ENCODE measurements at regions of chr4 and their contacts with region 1.

Region 1: GRCh38 chr4:4248029-4248884 is at the start of gene TMEM128:
- DNase-seq: peak; percentile 88
- ATAC-seq: peak; percentile 96
- H3K4me3 Mint-ChIP-seq: peak within 1 kb of the TSS; percentile 98
- H3K27ac Mint-ChIP-seq: peak within 1 kb of the TSS; percentile 98
- H3K4me1 Mint-ChIP-seq: peaks cover 25% of the 10 kb centered on the region
- H3K27me3 Mint-ChIP-seq: peaks cover 2% of the 10 kb centered on the region
- CTCF ChIP-seq: no peak
- total RNA-seq, gene TMEM128: 15.1 and 17.1 TPM in 2 replicates

Region 2: DNA sequence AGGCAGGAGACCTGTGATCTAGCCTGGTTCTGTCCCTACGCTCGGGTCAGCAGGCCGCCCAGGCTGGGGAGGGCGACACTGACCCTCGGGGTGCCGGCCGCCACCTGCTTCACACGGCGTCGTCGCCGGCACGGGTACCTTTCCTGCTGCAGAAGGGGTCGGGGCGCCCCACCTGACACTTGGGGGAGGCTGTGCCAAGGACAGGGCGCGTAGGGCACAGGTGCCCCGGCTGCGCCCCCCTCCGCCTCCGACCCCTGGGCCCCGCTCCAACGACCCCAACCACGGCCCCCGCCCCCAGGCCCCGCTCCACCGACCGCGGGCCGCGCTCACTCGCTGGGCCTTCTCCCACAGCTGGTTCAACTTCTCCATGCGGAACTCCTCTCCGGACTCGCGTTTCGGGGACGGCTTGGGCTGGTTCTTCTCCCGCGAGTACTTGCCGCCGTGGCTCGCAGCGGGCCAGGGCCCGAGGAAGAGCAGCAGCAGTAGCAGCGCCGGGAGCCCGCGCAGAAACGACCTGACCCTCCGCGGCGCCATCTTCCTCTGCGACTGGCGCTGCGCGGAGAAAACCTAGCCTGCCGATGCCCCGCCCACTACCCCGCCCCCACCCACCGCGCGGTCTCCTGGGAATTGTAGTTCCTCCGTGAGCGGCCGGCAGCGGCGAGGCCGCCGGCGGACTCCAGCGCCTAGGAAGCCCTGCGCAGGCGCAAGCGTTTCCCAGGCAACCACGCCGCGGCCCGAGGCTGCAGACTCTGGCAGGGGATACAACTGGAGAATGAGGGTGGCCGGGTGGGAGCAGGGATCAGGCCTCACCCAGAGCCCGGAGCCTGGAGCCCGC is 716.2 kb before region 1 on chr4 and contains the start of gene LRPAP1:
- CTCF ChIA-PET with region 1: no interaction called
- POLR2A ChIA-PET with region 1: no interaction called
- intact Hi-C with region 1: loop called (anchors 5 kb)
- DNase-seq: peak; percentile 91
- ATAC-seq: peak; percentile 89
- H3K4me3 Mint-ChIP-seq: peak within 1 kb of the TSS; percentile 99
- H3K27ac Mint-ChIP-seq: peak within 1 kb of the TSS; percentile 94
- H3K4me1 Mint-ChIP-seq: peaks cover 42% of the 10 kb centered on the region
- H3K27me3 Mint-ChIP-seq: no peaks in the 10 kb centered on the region
- CTCF ChIP-seq: no peak
- total RNA-seq, gene LRPAP1: 60.9 and 62.9 TPM in 2 replicates

Region 3: DNA sequence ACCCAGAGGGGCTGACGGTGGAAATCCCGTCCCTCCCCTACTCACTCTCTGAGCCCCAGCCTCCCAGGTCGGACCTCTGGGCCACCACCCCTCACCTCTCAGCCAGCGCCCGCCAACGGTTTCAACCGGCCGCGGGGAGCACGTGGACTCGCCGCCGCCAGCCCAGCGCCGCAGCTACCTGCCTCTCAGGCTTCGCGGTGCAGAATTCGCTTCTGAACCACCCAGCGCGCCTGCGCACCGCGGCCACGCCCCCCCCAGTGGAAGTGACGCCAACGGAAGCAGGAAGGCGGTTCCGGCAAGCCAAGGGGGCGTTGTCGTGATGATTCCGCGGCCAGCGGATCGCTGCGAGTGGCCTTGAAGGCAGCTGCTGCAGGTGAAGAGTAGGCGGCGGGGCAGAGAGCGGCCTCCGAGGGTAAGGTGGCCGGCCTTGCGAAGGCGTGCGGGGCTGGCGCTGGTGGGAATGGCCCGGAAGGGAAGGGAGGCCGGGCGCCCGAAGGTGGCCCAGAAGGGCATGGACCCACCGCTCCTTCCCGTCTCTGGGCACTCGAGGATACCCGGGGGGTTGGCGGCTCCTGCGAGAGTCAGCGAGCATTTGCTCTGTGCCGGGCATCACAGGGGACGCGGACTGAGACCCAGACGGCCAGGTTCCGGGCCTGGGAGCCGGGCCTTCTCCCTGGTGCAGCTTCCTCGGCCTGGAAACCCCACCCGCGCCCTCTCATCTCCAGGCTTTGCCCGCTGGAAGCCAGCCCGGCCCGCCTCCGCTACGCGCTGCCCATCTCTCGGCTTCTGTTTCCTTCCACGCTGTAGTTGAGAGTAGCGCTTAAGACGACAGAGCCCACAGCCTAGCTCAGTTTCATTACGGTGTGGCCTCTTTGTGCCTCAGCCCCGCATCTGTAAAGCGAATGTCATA is 41.9 kb after region 1 on chr4 and contains the starts of genes LYAR and ZBTB49:
- CTCF ChIA-PET with region 1: no interaction called
- POLR2A ChIA-PET with region 1: interaction called, 11 read pairs
- intact Hi-C with region 1: loop called (anchors 1 kb)
- DNase-seq: peak; percentile 97
- ATAC-seq: peak; percentile 95
- H3K4me3 Mint-ChIP-seq: peak within 1 kb of the TSS; percentile 96
- H3K27ac Mint-ChIP-seq: peak within 1 kb of the TSS; percentile 72
- H3K4me1 Mint-ChIP-seq: peaks cover 36% of the 10 kb centered on the region
- H3K27me3 Mint-ChIP-seq: no peaks in the 10 kb centered on the region
- CTCF ChIP-seq: no peak
- total RNA-seq, gene LYAR: 15.9 and 20.9 TPM in 2 replicates
- total RNA-seq, gene ZBTB49: 7.2 and 11.6 TPM in 2 replicates

Region 4: GRCh38 chr4:4334798-4335520 is 86.7 kb after region 1 on chr4:
- CTCF ChIA-PET with region 1: interaction called, 13 read pairs
- POLR2A ChIA-PET with region 1: no interaction called
- intact Hi-C with region 1: loop called (anchors 1 kb)
- DNase-seq: peak; percentile 48
- ATAC-seq: peak; percentile 75
- H3K4me3 Mint-ChIP-seq: peak overlapping the region; percentile 32
- H3K27ac Mint-ChIP-seq: no peak overlapping the region
- H3K4me1 Mint-ChIP-seq: peaks cover 6% of the 10 kb centered on the region
- H3K27me3 Mint-ChIP-seq: peaks cover 4% of the 10 kb centered on the region
- CTCF ChIP-seq: peak; percentile 49

Region 5: GRCh38 chr4:4430492-4431197 is 182.4 kb after region 1 on chr4:
- CTCF ChIA-PET with region 1: no interaction called
- POLR2A ChIA-PET with region 1: no interaction called
- intact Hi-C with region 1: loop called (anchors 5 kb)
- DNase-seq: no peak
- ATAC-seq: peak; percentile 37
- H3K4me3 Mint-ChIP-seq: no peak overlapping the region
- H3K27ac Mint-ChIP-seq: no peak overlapping the region
- H3K4me1 Mint-ChIP-seq: no peaks in the 10 kb centered on the region
- H3K27me3 Mint-ChIP-seq: no peaks in the 10 kb centered on the region
- CTCF ChIP-seq: no peak

Region 6: GRCh38 chr4:4541661-4542570 is 293.7 kb after region 1 on chr4 and contains the start of gene STX18:
- CTCF ChIA-PET with region 1: no interaction called
- POLR2A ChIA-PET with region 1: interaction called, 5 read pairs
- intact Hi-C with region 1: loop called (anchors 5 kb)
- DNase-seq: peak; percentile 92
- ATAC-seq: peak; percentile 95
- H3K4me3 Mint-ChIP-seq: peak within 1 kb of the TSS; percentile 90
- H3K27ac Mint-ChIP-seq: peak within 1 kb of the TSS; percentile 88
- H3K4me1 Mint-ChIP-seq: peaks cover 42% of the 10 kb centered on the region
- H3K27me3 Mint-ChIP-seq: no peaks in the 10 kb centered on the region
- CTCF ChIP-seq: no peak
- total RNA-seq, gene STX18: 27.1 and 27.3 TPM in 2 replicates

Region 7: DNA sequence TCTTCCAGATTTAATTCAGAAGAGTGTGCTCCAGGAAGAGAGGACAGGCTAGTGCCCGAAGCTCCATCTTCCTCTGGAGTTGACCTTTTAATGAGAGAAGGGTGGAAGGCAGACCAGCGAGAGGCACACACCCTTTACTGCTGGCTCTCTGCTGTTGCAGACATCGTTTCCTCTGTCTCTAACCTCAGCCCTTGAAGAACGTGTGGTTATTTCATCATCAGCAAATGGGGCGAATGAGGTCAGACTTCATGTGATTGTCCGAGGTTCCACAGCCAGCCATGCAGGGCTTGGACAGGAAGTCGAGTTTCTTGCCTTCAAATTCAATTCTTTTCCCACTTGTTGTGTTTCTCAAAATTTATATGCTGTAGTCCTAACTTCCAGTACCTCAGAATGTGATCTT is 456.0 kb after region 1 on chr4:
- CTCF ChIA-PET with region 1: no interaction called
- POLR2A ChIA-PET with region 1: no interaction called
- intact Hi-C with region 1: no loop called
- DNase-seq: no peak
- ATAC-seq: no peak
- H3K4me3 Mint-ChIP-seq: no peak overlapping the region
- H3K27ac Mint-ChIP-seq: no peak overlapping the region
- H3K4me1 Mint-ChIP-seq: no peaks in the 10 kb centered on the region
- H3K27me3 Mint-ChIP-seq: no peaks in the 10 kb centered on the region
- CTCF ChIP-seq: no peak

Measured in activated B cell treated with CpG ODN at 0.5 μM for 24 hours (primary cell).